Dendritic cell treated with granulocyte-macrophage colony-stimulating factor and Interleukin-4, amounts not matched to agents 40 ng/mL and 50 ng/mL, for 4 days (primary cell): ENCODE measurements at regions of chr12 and their contacts with region 1.

Region 1: GRCh38 chr12:25130741-25131188 is 64.2 kb downstream of the DNAI7 start:
- H3K4me3 Mint-ChIP-seq: no peak overlapping the region
- H3K27ac Mint-ChIP-seq: no peak overlapping the region
- H3K4me1 Mint-ChIP-seq: peaks cover 10% of the 10 kb centered on the region
- H3K27me3 Mint-ChIP-seq: no peaks in the 10 kb centered on the region

Region 2: DNA sequence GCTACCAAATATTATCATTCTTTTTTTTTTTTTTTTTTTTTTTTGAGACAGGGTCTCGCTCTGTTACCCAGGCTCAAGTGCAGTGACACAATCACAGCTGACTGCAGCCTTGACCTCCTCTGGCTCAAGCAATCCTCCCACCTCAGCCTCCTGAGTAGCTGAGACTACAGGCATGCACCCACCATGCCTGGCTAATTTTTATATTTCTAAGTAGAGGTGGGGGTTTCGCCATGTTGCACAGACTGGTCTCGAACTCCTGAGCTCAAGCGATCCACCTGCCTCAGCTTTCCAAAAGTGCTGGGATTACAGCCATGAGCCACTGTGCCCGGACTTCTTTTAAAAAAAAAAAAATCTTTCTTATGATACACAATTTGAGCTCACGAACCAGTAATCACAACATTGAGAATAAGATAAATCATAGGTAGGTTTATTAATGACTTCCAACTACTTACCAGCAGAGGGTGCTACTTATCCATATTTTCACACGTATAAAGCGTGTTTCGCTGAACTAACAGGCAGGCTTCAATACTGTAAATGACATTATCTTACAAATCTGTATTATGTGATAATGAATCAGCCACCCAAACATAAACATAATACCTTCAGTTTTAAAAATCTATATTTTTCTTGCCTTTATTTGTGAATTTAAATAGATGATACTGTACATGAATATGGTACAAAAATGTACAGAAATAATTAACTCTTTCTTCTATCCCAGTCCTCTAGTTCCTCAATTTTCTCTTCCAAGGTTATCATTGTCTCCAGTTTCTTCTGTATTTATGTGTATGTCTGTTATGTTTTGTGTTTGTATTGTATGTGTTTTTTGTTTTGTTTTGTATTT is 139.3 kb before region 1 on chr12:
- intact Hi-C with region 1: loop called (anchors 1 kb)
- H3K4me3 Mint-ChIP-seq: no peak overlapping the region
- H3K27ac Mint-ChIP-seq: no peak overlapping the region
- H3K4me1 Mint-ChIP-seq: peaks cover 9% of the 10 kb centered on the region
- H3K27me3 Mint-ChIP-seq: peaks cover 4% of the 10 kb centered on the region

Region 3: GRCh38 chr12:25186788-25187397 is 56.1 kb after region 1 on chr12:
- intact Hi-C with region 1: no loop called
- H3K4me3 Mint-ChIP-seq: no peak overlapping the region
- H3K27ac Mint-ChIP-seq: no peak overlapping the region
- H3K4me1 Mint-ChIP-seq: no peaks in the 10 kb centered on the region
- H3K27me3 Mint-ChIP-seq: no peaks in the 10 kb centered on the region